PC-3 (cell line): ENCODE measurements at regions of chr7 and their contacts with region 1.

Region 1: DNA sequence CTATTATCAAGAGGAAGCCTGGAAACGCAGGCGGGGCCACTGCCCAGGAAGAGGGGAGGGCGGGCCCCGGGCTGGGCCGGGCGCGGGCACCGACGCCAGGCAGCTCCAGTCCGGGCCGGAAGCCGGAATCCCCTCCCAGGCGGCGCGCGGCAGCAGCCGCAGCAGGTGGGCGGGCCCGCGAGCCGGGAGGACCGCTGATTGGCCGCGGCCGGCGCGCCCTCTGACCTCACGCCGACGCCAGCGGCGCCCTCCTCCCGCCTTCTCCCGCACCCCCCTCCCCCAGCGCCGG is 438 bp downstream of the BCL7B start:
- DNase-seq: peak; percentile 94
- ATAC-seq: peak; percentile 90
- H3K4me3 ChIP-seq: peak overlapping the region; percentile 81
- H3K27ac ChIP-seq: peak overlapping the region; percentile 95
- H3K4me1 ChIP-seq: peaks cover 18% of the 10 kb centered on the region
- H3K27me3 ChIP-seq: no peaks in the 10 kb centered on the region
- CTCF ChIP-seq: no peak

Region 2: GRCh38 chr7:73522105-73522872 is 34.8 kb before region 1 on chr7 and contains the start of gene BAZ1B:
- CTCF ChIA-PET with region 1: no interaction called
- POLR2A ChIA-PET with region 1: interaction called, 7 read pairs
- intact Hi-C with region 1: loop called (anchors 2 kb)
- DNase-seq: peak; percentile 96
- ATAC-seq: peak; percentile 92
- H3K4me3 ChIP-seq: peak within 1 kb of the TSS; percentile 82
- H3K27ac ChIP-seq: peak within 1 kb of the TSS; percentile 84
- H3K4me1 ChIP-seq: peaks cover 19% of the 10 kb centered on the region; the same call in 1 of the 2 replicates
- H3K27me3 ChIP-seq: no peaks in the 10 kb centered on the region
- CTCF ChIP-seq: no peak
- total RNA-seq, gene BAZ1B: 45.5 and 62.5 TPM in 2 replicates

Region 3: DNA sequence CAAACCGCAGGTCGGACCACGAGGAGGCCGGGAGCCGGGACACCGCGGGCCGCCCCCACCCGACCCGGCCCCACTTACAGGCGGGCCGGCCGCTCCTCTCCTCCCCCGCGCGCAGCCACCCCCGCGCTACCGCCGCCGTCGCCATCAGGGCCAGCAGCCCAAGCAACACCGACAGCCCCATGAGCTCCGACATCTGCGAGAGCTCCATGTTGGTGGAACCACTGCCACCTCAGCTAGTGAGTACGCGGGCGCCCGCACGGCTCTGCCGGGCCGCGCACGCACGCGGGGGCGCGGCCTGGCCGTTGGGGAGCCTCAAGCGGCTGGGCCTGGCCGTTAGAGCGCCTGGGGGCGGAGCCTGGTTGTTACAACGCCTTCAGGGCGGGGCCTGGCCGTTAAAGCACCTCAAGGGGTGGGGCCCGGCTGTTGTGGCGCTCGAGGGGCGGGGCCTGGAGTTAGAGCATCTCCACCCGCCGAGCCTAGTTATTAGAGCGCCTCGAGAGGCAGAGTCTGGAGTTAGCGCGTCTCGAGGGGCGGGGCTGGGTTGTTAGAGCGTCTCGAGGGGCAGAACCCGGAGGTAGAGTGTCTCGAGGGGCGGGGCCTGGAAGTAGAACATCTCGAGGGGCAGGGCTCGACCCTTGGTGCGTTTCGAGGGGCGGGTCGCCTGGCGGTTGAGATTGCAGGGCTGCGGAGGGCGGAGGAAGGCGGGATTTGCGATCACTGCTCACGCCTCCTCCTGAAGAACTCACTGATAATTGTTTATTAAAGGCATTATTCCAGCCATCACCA is 21.5 kb after region 1 on chr7 and contains the start of gene TBL2:
- CTCF ChIA-PET with region 1: no interaction called
- POLR2A ChIA-PET with region 1: interaction called, 8 read pairs
- intact Hi-C with region 1: loop called (anchors 1 kb)
- DNase-seq: peak; percentile 99
- ATAC-seq: peak; percentile 89
- H3K4me3 ChIP-seq: peak within 1 kb of the TSS; percentile 84
- H3K27ac ChIP-seq: peak within 1 kb of the TSS; percentile 47
- H3K4me1 ChIP-seq: peaks cover 20% of the 10 kb centered on the region
- H3K27me3 ChIP-seq: no peaks in the 10 kb centered on the region
- CTCF ChIP-seq: no peak
- total RNA-seq, gene TBL2: 62.8 and 73.0 TPM in 2 replicates

Region 4: GRCh38 chr7:73667344-73668102 is 110.5 kb after region 1 on chr7 and contains the start of gene VPS37D:
- CTCF ChIA-PET with region 1: no interaction called
- POLR2A ChIA-PET with region 1: interaction called, 16 read pairs
- intact Hi-C with region 1: no loop called
- DNase-seq: peak; percentile 89
- ATAC-seq: peak; percentile 84
- H3K4me3 ChIP-seq: peak within 1 kb of the TSS; percentile 77
- H3K27ac ChIP-seq: no peak within 1 kb of the TSS
- H3K4me1 ChIP-seq: peaks cover 4% of the 10 kb centered on the region; the same call in 1 of the 2 replicates
- H3K27me3 ChIP-seq: no peaks in the 10 kb centered on the region
- CTCF ChIP-seq: peak; percentile 53
- total RNA-seq, gene VPS37D: 6.3 and 7.7 TPM in 2 replicates